ENCODE measurements at regions of chr12 and their contacts with region 1.

Region 1: GRCh38 chr12:105330283-105330930 is at the start of gene C12orf75:
- DNase-seq: peak; percentile 92 to 95
- H3K4me3 ChIP-seq: peak within 1 kb of the TSS; percentile 56
- H3K4me3 Mint-ChIP-seq: peak within 1 kb of the TSS; percentile 90
- H3K27ac Mint-ChIP-seq: peak within 1 kb of the TSS; percentile 85
- H3K4me1 ChIP-seq: peaks cover 30% of the 10 kb centered on the region
- H3K4me1 Mint-ChIP-seq: peaks cover 11% of the 10 kb centered on the region
- H3K27me3 ChIP-seq: no peaks in the 10 kb centered on the region
- H3K27me3 Mint-ChIP-seq: no peaks in the 10 kb centered on the region
- CTCF ChIP-seq: no peak
- total RNA-seq, gene C12orf75: 173 and 209 TPM in 2 replicates

Region 2: DNA sequence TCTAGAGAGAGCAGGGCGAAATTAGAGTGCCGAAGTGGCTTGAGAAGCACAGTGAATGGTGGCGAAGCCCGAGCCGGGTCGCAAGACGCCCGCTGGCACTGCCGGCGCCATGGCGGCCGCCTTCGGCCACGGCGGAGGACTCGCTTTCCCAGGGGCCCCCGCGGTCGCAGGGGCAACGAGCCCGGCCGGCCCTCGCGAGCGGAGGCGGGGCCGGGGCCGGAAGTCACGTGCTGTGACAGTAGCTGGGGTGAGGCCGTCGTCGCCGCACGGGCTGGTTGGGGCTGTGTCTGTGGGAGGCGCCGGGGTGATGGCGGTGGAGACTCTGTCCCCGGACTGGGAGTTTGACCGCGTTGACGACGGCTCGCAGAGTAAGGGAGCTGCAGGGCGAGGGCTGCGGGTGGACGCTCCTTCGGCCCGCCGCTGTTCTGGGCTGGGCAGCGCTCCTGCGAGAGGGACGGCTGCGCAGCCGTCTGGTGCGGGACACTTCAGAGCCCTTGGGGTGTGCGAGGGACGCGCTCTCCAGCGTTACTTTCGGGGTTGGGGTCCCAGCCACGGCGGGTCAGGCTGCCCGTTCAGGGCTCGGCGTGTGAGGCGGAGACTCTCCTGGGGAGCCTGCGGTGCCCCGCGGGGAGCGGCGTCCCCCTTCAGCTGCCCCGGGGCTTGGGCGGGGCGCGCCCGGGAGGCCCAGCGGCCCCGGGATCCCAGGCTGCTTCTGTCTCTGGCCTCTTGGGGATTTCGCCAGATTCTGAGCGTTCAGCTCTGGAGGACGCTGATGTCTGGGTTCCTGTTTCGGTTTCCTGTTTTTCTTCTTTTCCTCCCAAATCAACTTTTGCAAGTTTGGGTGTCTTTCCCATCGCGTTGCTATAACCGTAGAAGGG is 222.7 kb before region 1 on chr12 and contains the start of gene WASHC4:
- CTCF ChIA-PET with region 1: no interaction called
- POLR2A ChIA-PET with region 1: no interaction called
- intact Hi-C with region 1: loop called (anchors 10 kb)
- DNase-seq: peak; percentile 93 to 96
- H3K4me3 ChIP-seq: peak within 1 kb of the TSS; percentile 100
- H3K4me3 Mint-ChIP-seq: peak within 1 kb of the TSS; percentile 95
- H3K27ac Mint-ChIP-seq: peak within 1 kb of the TSS; percentile 93
- H3K4me1 ChIP-seq: peaks cover 4% of the 10 kb centered on the region; the same call in 1 of the 2 replicates
- H3K4me1 Mint-ChIP-seq: peaks cover 12% of the 10 kb centered on the region
- H3K27me3 ChIP-seq: no peaks in the 10 kb centered on the region
- H3K27me3 Mint-ChIP-seq: no peaks in the 10 kb centered on the region
- CTCF ChIP-seq: no peak
- total RNA-seq, gene WASHC4: 41.0 and 43.5 TPM in 2 replicates

Region 3: DNA sequence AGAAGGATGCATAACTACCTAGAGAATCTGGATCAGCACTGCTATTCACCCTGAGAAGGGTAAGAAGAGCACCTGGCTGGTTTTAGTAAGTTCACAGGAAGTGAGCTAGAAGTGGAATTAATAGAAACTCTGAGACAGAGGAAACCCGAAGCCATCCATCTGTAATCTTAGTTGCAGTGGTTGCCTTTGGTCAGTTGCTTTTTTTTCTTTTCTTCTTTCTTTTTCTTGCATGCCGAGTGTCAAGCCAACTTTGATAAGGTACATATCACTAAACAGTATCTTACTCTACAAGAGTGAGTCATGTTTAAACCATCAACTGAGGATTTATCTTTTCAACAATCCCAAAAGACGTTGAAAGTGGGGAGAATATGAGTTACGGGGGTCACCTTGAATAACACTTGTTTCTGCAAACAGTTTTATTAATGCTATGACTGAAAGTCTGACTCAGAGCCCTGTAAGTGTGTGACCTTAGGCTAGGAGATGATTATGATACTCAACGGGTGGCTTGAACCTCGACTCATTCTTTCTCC is 26.8 kb after region 1 on chr12:
- CTCF ChIA-PET with region 1: no interaction called
- POLR2A ChIA-PET with region 1: no interaction called
- intact Hi-C with region 1: no loop called
- DNase-seq: peak in 1 of 2 experiments; percentile 17
- H3K4me3 ChIP-seq: no peak overlapping the region
- H3K4me3 Mint-ChIP-seq: peak overlapping the region; percentile 27
- H3K27ac Mint-ChIP-seq: peak overlapping the region; percentile 83
- H3K4me1 ChIP-seq: peaks cover 63% of the 10 kb centered on the region
- H3K4me1 Mint-ChIP-seq: peaks cover 37% of the 10 kb centered on the region
- H3K27me3 ChIP-seq: no peaks in the 10 kb centered on the region
- H3K27me3 Mint-ChIP-seq: no peaks in the 10 kb centered on the region
- CTCF ChIP-seq: no peak

Region 4: DNA sequence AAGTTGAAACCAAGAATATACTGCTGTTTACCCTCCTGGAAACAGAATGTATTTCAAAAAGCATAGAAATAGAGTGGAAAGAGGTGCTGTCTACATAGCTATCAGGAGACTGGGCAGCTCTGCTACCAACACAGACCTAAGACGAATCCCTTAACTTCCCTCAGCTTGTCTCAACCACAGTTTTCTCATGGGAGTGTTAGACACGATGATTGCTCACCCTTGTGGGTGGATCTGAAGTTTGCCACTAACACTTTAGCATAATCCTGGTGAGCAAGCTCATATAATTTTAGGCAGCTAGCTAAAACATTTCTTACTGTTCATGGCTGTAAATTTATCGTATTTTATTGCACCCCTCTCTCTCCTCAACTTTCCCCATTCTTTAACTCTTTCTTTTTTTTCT is 38.6 kb after region 1 on chr12:
- CTCF ChIA-PET with region 1: no interaction called
- POLR2A ChIA-PET with region 1: no interaction called
- intact Hi-C with region 1: loop called (anchors 5 kb)
- DNase-seq: no peak
- H3K4me3 ChIP-seq: no peak overlapping the region
- H3K4me3 Mint-ChIP-seq: no peak overlapping the region
- H3K27ac Mint-ChIP-seq: no peak overlapping the region
- H3K4me1 ChIP-seq: no peaks in the 10 kb centered on the region
- H3K4me1 Mint-ChIP-seq: no peaks in the 10 kb centered on the region
- H3K27me3 ChIP-seq: no peaks in the 10 kb centered on the region
- H3K27me3 Mint-ChIP-seq: no peaks in the 10 kb centered on the region
- CTCF ChIP-seq: no peak

Region 5: GRCh38 chr12:105462831-105463230 is 132.4 kb after region 1 on chr12:
- CTCF ChIA-PET with region 1: no interaction called
- POLR2A ChIA-PET with region 1: no interaction called
- intact Hi-C with region 1: no loop called
- DNase-seq: no peak
- H3K4me3 ChIP-seq: no peak overlapping the region
- H3K4me3 Mint-ChIP-seq: no peak overlapping the region
- H3K27ac Mint-ChIP-seq: no peak overlapping the region
- H3K4me1 ChIP-seq: peaks cover 12% of the 10 kb centered on the region; the same call in 1 of the 2 replicates
- H3K4me1 Mint-ChIP-seq: peaks cover 16% of the 10 kb centered on the region
- H3K27me3 ChIP-seq: no peaks in the 10 kb centered on the region
- H3K27me3 Mint-ChIP-seq: no peaks in the 10 kb centered on the region
- CTCF ChIP-seq: no peak